Activated CD4-positive, alpha-beta T cell treated with anti-CD3 and anti-CD28 coated beads, Interleukin-2, amount 10 ng/mL, durations not matched to agents 24 days and 14 days (primary cell): ENCODE measurements at regions of chr12 and their contacts with region 1.

Region 1: GRCh38 chr12:12376646-12377448 is 20.0 kb downstream of the BORCS5 start:
- DNase-seq: peak; percentile 79
- H3K4me3 Mint-ChIP-seq: no peak overlapping the region
- H3K27ac Mint-ChIP-seq: peak overlapping the region; percentile 35
- H3K4me1 Mint-ChIP-seq: peaks cover 23% of the 10 kb centered on the region
- H3K27me3 Mint-ChIP-seq: no peaks in the 10 kb centered on the region

Region 2: GRCh38 chr12:12064596-12064995 is 312.3 kb before region 1 on chr12:
- intact Hi-C with region 1: no loop called
- DNase-seq: no peak
- H3K4me3 Mint-ChIP-seq: no peak overlapping the region
- H3K27ac Mint-ChIP-seq: no peak overlapping the region
- H3K4me1 Mint-ChIP-seq: peaks cover 5% of the 10 kb centered on the region
- H3K27me3 Mint-ChIP-seq: peaks cover 4% of the 10 kb centered on the region

Region 3: GRCh38 chr12:12390390-12390789 is 13.5 kb after region 1 on chr12:
- intact Hi-C with region 1: loop called (anchors 1 kb)
- DNase-seq: peak; percentile 33
- H3K4me3 Mint-ChIP-seq: no peak overlapping the region
- H3K27ac Mint-ChIP-seq: no peak overlapping the region
- H3K4me1 Mint-ChIP-seq: peaks cover 16% of the 10 kb centered on the region
- H3K27me3 Mint-ChIP-seq: no peaks in the 10 kb centered on the region

Region 4: GRCh38 chr12:12474931-12475795 is 98.3 kb after region 1 on chr12:
- intact Hi-C with region 1: loop called (anchors 1 kb)
- DNase-seq: peak; percentile 90
- H3K4me3 Mint-ChIP-seq: peak overlapping the region; percentile 78
- H3K27ac Mint-ChIP-seq: peak overlapping the region; percentile 100
- H3K4me1 Mint-ChIP-seq: peaks cover 59% of the 10 kb centered on the region
- H3K27me3 Mint-ChIP-seq: no peaks in the 10 kb centered on the region

Region 5: DNA sequence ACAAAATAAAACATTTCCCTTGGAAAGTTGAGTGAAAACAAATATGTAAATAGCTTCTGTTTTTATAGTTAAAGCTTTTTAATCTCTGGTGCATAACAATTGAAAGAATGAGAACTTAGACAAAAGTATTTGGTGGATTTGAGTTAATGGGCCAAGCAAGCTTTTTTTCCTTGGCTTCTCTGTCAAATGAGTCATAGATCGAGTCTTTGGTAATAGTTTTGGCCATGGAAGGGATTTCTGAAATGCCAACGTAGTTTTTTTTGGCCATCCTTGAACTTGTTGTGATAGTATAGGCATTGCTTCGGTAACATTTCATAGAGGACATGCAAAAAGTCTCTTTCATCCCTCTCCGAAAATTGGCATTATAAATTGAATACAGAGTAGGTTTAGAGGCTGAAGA is 284.2 kb after region 1 on chr12:
- intact Hi-C with region 1: loop called (anchors 1 kb)
- DNase-seq: no peak
- H3K4me3 Mint-ChIP-seq: no peak overlapping the region
- H3K27ac Mint-ChIP-seq: no peak overlapping the region
- H3K4me1 Mint-ChIP-seq: peaks cover under 1% of the 10 kb centered on the region
- H3K27me3 Mint-ChIP-seq: no peaks in the 10 kb centered on the region

Region 6: GRCh38 chr12:12704593-12705230 is 327.9 kb after region 1 on chr12:
- intact Hi-C with region 1: loop called (anchors 1 kb)
- DNase-seq: peak; percentile 77
- H3K4me3 Mint-ChIP-seq: no peak overlapping the region
- H3K27ac Mint-ChIP-seq: no peak overlapping the region
- H3K4me1 Mint-ChIP-seq: peaks cover 28% of the 10 kb centered on the region
- H3K27me3 Mint-ChIP-seq: no peaks in the 10 kb centered on the region

Region 7: DNA sequence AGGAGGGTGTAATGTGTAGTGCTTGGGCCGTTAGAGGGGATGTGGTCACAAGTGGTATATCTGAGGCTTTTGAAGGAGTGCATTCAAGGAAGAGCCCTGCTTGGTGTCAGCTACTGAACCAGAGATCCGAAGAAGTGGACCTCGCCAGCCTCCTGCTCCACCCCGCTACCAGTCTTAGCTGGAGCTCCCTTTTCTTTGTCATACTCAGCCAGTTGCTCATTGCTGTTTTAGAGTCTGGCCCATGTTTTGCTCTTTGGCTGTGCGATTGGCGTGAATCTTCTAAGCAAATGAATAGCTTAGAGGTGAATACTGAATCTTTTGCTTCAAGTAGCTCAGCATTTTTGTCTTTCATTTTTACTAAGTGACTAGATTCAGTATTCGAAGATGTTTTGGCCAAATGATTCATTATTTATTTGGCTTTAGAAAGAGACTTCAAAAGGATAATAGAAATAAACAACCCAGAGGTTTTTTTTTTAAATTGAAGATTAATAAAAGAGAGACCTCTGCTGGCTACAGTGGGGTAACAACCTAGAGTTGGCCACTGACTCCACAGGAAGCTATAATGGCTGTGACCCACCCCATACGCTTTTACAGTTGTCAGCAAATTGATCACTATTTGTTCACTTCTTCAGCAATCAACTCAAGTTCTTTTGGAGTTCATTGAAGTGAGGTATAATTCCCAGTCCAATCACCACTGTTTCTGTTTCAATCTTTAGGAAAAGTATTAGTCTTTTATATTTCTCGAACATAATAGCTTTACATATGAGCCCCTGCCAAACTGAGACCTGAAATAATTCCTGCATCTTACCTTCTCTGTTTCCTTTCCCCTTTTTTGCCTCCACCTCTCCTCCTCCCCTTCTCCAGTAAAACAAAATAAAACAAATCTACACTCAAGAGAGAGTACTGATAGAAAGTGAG is 360.2 kb after region 1 on chr12:
- intact Hi-C with region 1: loop called (anchors 1 kb)
- DNase-seq: peak; percentile 85
- H3K4me3 Mint-ChIP-seq: peak overlapping the region; percentile 85
- H3K27ac Mint-ChIP-seq: peak overlapping the region; percentile 95
- H3K4me1 Mint-ChIP-seq: peaks cover 47% of the 10 kb centered on the region
- H3K27me3 Mint-ChIP-seq: no peaks in the 10 kb centered on the region